Activated T-helper 1 cell treated with anti-CD3 and anti-CD28 coated beads, Interleukin-12 subunit alpha, Interleukin-12 subunit beta, Interleukin-2, Interleukin-4 antibody, amounts not matched to agents 30 ng/mL and 10 ng/mL and 1 ng/mL, durations not matched to agents 14 hours and 24 hours and 36 hours (primary cell): ENCODE measurements at regions of chr6 and their contacts with region 1.

Region 1: GRCh38 chr6:129672881-129673643 is 36.9 kb downstream of the ARHGAP18 start:
- DNase-seq: peak; percentile 20
- H3K4me3 Mint-ChIP-seq: peak overlapping the region; percentile 66
- H3K27ac Mint-ChIP-seq: peak overlapping the region; percentile 95
- H3K4me1 Mint-ChIP-seq: peaks cover 56% of the 10 kb centered on the region
- H3K27me3 Mint-ChIP-seq: no peaks in the 10 kb centered on the region

Region 2: GRCh38 chr6:129490521-129491245 is 182.4 kb before region 1 on chr6:
- intact Hi-C with region 1: loop called (anchors 2 kb)
- DNase-seq: peak; percentile 69
- H3K4me3 Mint-ChIP-seq: peak overlapping the region; percentile 77
- H3K27ac Mint-ChIP-seq: peak overlapping the region; percentile 99
- H3K4me1 Mint-ChIP-seq: peaks cover 68% of the 10 kb centered on the region
- H3K27me3 Mint-ChIP-seq: no peaks in the 10 kb centered on the region

Region 3: GRCh38 chr6:129621247-129621646 is 51.8 kb before region 1 on chr6:
- intact Hi-C with region 1: loop called (anchors 2 kb)
- DNase-seq: no peak
- H3K4me3 Mint-ChIP-seq: no peak overlapping the region
- H3K27ac Mint-ChIP-seq: no peak overlapping the region
- H3K4me1 Mint-ChIP-seq: no peaks in the 10 kb centered on the region
- H3K27me3 Mint-ChIP-seq: no peaks in the 10 kb centered on the region

Region 4: GRCh38 chr6:129695373-129696027 is 22.4 kb after region 1 on chr6:
- intact Hi-C with region 1: loop called (anchors 1 kb)
- DNase-seq: no peak
- H3K4me3 Mint-ChIP-seq: peak overlapping the region; percentile 13
- H3K27ac Mint-ChIP-seq: no peak overlapping the region
- H3K4me1 Mint-ChIP-seq: peaks cover 74% of the 10 kb centered on the region
- H3K27me3 Mint-ChIP-seq: peaks cover 2% of the 10 kb centered on the region

Region 5: GRCh38 chr6:129730477-129731165 is 57.6 kb after region 1 on chr6:
- intact Hi-C with region 1: loop called (anchors 1 kb)
- DNase-seq: no peak
- H3K4me3 Mint-ChIP-seq: no peak overlapping the region
- H3K27ac Mint-ChIP-seq: peak overlapping the region; percentile 29
- H3K4me1 Mint-ChIP-seq: peaks cover 15% of the 10 kb centered on the region
- H3K27me3 Mint-ChIP-seq: peaks cover 4% of the 10 kb centered on the region

Region 6: DNA sequence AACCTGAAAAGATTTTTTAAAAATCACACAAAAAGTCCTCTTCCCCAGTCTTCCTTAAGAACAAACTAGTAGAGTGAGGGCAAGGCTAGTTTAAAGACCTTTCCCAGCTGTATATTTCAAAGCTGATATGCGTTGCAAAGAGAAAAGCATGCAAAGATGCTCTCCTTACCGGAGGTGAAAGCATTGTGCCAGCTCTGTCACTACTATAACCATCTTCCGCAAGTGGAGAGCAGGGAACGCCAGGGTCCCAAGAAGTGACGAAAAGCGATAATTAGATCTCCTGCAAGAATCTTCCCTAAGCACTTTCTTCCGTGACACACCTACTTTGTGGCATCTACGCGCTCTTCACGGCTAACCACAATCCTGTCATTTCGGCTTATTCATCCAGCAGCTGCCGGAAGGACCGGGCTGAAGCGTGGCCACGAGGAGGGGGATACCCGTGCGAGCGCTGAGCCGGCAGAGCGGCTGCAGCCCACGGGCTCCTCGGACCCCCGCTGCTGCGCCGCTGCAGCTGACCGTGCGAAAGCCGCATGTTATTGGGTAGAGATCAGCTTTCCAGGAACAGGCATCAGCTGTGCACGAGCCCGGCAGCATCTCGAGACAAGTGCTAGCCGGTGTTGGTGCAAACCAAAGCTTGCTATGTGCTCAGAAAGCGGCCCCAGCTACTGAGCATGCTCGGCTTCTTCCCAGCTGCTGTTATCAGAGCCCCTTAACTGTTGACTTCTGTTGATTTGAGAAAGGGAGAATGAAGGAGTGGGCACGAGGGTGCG is 94.1 kb after region 1 on chr6:
- intact Hi-C with region 1: loop called (anchors 1 kb)
- DNase-seq: peak; percentile 66
- H3K4me3 Mint-ChIP-seq: peak overlapping the region; percentile 83
- H3K27ac Mint-ChIP-seq: peak overlapping the region; percentile 66
- H3K4me1 Mint-ChIP-seq: peaks cover 37% of the 10 kb centered on the region
- H3K27me3 Mint-ChIP-seq: peaks cover 55% of the 10 kb centered on the region